ENCODE measurements at regions of chr1 and their contacts with region 1.

Region 1: DNA sequence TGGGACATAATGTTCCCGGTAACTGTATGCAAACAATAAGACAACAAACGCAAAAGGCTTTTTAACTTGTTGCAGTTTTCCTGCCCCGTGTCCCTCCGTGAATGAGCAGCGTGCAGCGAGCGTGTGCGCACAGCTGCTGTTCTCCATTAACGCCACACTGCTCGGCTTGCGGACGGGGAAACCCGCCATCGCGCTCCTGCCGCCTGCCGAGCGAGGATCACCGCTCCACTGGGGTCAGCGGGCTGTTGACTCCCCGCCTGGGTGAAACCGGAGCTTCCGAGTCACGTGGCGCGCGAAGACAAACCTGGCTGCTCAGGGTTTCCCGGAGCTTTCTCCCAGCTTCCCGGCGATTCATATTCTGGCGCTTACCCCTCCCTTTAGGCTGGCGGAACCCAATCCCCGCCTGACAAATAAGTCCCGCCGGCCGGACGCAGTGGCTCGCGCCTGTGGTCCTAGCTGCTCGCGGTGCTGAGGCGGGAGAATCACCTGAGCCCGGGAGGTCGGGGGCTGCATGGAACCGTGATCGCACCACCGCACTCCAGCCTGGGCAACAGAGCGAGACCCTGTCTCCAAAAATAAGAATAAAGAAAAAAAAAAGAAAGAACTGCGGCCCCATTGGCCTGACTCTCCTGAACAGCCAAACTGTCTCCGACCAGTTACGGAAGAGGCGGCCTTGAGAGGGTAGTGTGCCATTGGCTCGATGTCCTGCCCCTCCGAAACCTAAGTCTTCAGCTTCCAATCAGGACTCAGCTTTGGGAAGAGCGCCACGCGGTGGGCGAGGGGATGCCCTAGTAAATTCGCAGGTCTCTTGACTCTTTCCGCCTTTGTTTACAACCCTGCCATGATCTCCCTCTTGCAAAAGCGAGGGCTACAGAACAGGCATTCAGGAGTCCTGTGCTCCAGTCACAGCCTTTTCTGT is at the start of gene CREB3L4:
- DNase-seq: peak; percentile 87
- H3K4me3 ChIP-seq: peak within 1 kb of the TSS; percentile 61 to 85
- H3K27ac ChIP-seq: peak within 1 kb of the TSS; percentile 77 to 87
- H3K4me1 ChIP-seq: peaks cover 0 to 26% of the 10 kb centered on the region in 2 experiments; a peak in 2 of 4 replicates
- H3K27me3 ChIP-seq: no peaks in the 10 kb centered on the region
- CTCF ChIP-seq: peak; percentile 49
- EP300 ChIP-seq: 0 out of 4 replicates have a peak, but pooled peaks of 1 of the 2 experiments have one; percentile 6
- RAD21 ChIP-seq: peak; percentile 32; the same call in 1 of the 2 replicates
- polyA plus RNA-seq, gene CREB3L4: 12.8 and 16.6 TPM in 2 replicates

Region 2: DNA sequence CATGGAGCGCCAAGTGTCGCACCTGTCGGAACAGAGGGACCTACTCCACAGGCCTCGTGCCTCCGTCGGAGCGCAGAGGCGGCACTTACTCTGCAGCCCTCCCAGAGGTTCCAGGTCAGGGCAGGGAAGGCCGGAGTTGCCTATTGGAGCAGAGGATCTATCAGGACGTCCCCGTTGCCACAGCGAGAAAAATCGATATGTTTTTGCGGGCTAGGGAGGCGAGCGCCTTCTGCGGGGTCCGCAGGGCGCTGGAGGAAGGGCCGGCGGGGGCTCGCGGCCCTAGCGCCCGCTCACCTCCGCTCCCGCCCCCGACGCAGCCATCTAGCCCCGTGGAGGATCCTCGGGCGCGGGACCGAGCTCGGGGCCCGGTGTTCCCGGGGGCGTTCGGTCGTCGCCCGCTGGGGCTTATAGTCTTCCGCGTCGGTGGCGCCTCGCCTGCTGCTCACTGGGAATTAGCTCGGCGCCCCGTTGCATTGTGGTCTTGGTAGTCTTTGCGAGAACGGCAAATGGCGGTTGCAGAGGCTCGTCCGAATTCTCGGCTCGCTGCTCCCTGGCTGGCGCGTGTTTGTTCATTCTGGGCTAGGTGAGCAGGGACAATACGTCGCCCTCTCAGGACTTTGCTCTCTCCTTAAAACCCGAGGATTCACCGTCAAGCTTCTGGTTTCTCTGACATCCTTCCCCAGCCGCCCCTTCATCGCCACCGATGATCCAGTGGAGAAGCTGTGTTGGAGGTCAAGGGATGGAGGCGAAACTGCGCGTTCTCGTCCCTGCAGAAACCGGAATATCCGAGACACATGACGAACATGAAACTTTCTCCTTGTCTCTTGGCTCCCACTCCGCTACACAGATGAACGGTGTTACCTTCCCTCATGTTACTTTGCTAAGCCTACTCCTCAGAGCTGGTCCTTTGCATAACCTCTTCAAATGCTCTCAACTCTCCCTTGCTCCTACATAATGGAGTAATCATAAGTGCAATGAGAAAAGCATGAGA is 10.2 kb after region 1 on chr1 and contains the start of gene JTB:
- CTCF ChIA-PET with region 1: interaction called, 25 read pairs
- POLR2A ChIA-PET with region 1: interaction called, 69 read pairs
- DNase-seq: peak; percentile 89
- H3K4me3 ChIP-seq: peak within 1 kb of the TSS; percentile 92 to 95
- H3K27ac ChIP-seq: peak within 1 kb of the TSS; percentile 63 to 91; a peak in 3 of 4 replicates
- H3K4me1 ChIP-seq: peaks cover 5 to 16% of the 10 kb centered on the region in 2 experiments; a peak in 2 of 4 replicates
- H3K27me3 ChIP-seq: no peaks in the 10 kb centered on the region
- CTCF ChIP-seq: no peak
- EP300 ChIP-seq: no peak
- RAD21 ChIP-seq: no peak
- polyA plus RNA-seq, gene JTB: 118 and 122 TPM in 2 replicates

Region 3: GRCh38 chr1:154104433-154105082 is 137.2 kb after region 1 on chr1:
- CTCF ChIA-PET with region 1: no interaction called
- POLR2A ChIA-PET with region 1: no interaction called
- DNase-seq: no peak
- H3K4me3 ChIP-seq: no peak overlapping the region
- H3K27ac ChIP-seq: no peak overlapping the region
- H3K4me1 ChIP-seq: no peaks in the 10 kb centered on the region
- H3K27me3 ChIP-seq: no peaks in the 10 kb centered on the region
- CTCF ChIP-seq: no peak
- EP300 ChIP-seq: no peak
- RAD21 ChIP-seq: no peak

Region 4: GRCh38 chr1:154324669-154325582 is 357.6 kb after region 1 on chr1 and contains the start of gene ATP8B2:
- CTCF ChIA-PET with region 1: no interaction called
- POLR2A ChIA-PET with region 1: no interaction called
- DNase-seq: peak; percentile 92
- H3K4me3 ChIP-seq: peak within 1 kb of the TSS; percentile 78 to 84
- H3K27ac ChIP-seq: peak within 1 kb of the TSS; percentile 88 to 92
- H3K4me1 ChIP-seq: peaks cover 21 to 43% of the 10 kb centered on the region in 2 experiments; a peak in 3 of 4 replicates
- H3K27me3 ChIP-seq: no peaks in the 10 kb centered on the region; the same call in 1 of the 2 replicates
- CTCF ChIP-seq: peak; percentile 96
- EP300 ChIP-seq: no peak
- RAD21 ChIP-seq: peak; percentile 51
- polyA plus RNA-seq, gene ATP8B2: 42.7 and 50.7 TPM in 2 replicates